ENCODE measurements at regions of chr14 and their contacts with region 1.

Region 1: GRCh38 chr14:88385345-88386101 is at the start of gene SPATA7:
- DNase-seq: peak; percentile 93
- ATAC-seq: peak; percentile 97
- H3K4me3 ChIP-seq: peak within 1 kb of the TSS; percentile 95
- H3K27ac ChIP-seq: no peak within 1 kb of the TSS
- H3K4me1 ChIP-seq: peaks cover 10% of the 10 kb centered on the region
- H3K27me3 ChIP-seq: no peaks in the 10 kb centered on the region
- CTCF ChIP-seq: 0 out of 2 replicates have a peak, but pooled peaks have one; percentile 20
- total RNA-seq, gene SPATA7: 2.8 and 3.9 TPM in 2 replicates

Region 2: GRCh38 chr14:87805315-87805723 is 580.2 kb before region 1 on chr14:
- CTCF ChIA-PET with region 1: no interaction called
- POLR2A ChIA-PET with region 1: no interaction called
- intact Hi-C with region 1: no loop called
- DNase-seq: peak; percentile 22
- ATAC-seq: no peak
- H3K4me3 ChIP-seq: no peak overlapping the region
- H3K27ac ChIP-seq: no peak overlapping the region
- H3K4me1 ChIP-seq: no peaks in the 10 kb centered on the region
- H3K27me3 ChIP-seq: no peaks in the 10 kb centered on the region
- CTCF ChIP-seq: peak; percentile 60

Region 3: GRCh38 chr14:88179716-88180115 is 205.8 kb before region 1 on chr14:
- CTCF ChIA-PET with region 1: no interaction called
- POLR2A ChIA-PET with region 1: no interaction called
- intact Hi-C with region 1: no loop called
- DNase-seq: no peak
- ATAC-seq: no peak
- H3K4me3 ChIP-seq: no peak overlapping the region
- H3K27ac ChIP-seq: no peak overlapping the region
- H3K4me1 ChIP-seq: 0 out of 2 replicates have a peak, but pooled peaks cover 3% of the 10 kb centered on the region
- H3K27me3 ChIP-seq: no peaks in the 10 kb centered on the region
- CTCF ChIP-seq: no peak

Region 4: GRCh38 chr14:88430976-88431375 is 45.5 kb after region 1 on chr14:
- CTCF ChIA-PET with region 1: no interaction called
- POLR2A ChIA-PET with region 1: no interaction called
- intact Hi-C with region 1: loop called (anchors 5 kb)
- DNase-seq: no peak
- ATAC-seq: no peak
- H3K4me3 ChIP-seq: no peak overlapping the region
- H3K27ac ChIP-seq: no peak overlapping the region
- H3K4me1 ChIP-seq: peaks cover 14% of the 10 kb centered on the region
- H3K27me3 ChIP-seq: no peaks in the 10 kb centered on the region
- CTCF ChIP-seq: no peak